Activated CD4-positive, alpha-beta T cell treated with anti-CD3 and anti-CD28 coated beads for 36 hours (primary cell): ENCODE measurements at regions of chr7 and their contacts with region 1.

Region 1: GRCh38 chr7:78020136-78020873 is 221.7 kb downstream of the PHTF2 start:
- DNase-seq: peak; percentile 45
- ATAC-seq: peak; percentile 60
- H3K4me3 Mint-ChIP-seq: peak overlapping the region; percentile 78
- H3K27ac Mint-ChIP-seq: peak overlapping the region; percentile 80
- H3K4me1 Mint-ChIP-seq: peaks cover 12% of the 10 kb centered on the region
- H3K27me3 Mint-ChIP-seq: peaks cover 21% of the 10 kb centered on the region

Region 2: GRCh38 chr7:77696198-77697028 is 323.9 kb before region 1 on chr7 and contains the start of gene RSBN1L:
- CTCF ChIA-PET with region 1: interaction called, 3 read pairs
- POLR2A ChIA-PET with region 1: no interaction called
- intact Hi-C with region 1: loop called in 1 of 2 experiments (anchors 5 kb)
- DNase-seq: peak; percentile 99
- ATAC-seq: peak; percentile 98
- H3K4me3 Mint-ChIP-seq: peak within 1 kb of the TSS; percentile 99
- H3K27ac Mint-ChIP-seq: peak within 1 kb of the TSS; percentile 95
- H3K4me1 Mint-ChIP-seq: peaks cover 45% of the 10 kb centered on the region
- H3K27me3 Mint-ChIP-seq: no peaks in the 10 kb centered on the region
- total RNA-seq, gene RSBN1L: 21.0 to 26.3 TPM

Region 3: DNA sequence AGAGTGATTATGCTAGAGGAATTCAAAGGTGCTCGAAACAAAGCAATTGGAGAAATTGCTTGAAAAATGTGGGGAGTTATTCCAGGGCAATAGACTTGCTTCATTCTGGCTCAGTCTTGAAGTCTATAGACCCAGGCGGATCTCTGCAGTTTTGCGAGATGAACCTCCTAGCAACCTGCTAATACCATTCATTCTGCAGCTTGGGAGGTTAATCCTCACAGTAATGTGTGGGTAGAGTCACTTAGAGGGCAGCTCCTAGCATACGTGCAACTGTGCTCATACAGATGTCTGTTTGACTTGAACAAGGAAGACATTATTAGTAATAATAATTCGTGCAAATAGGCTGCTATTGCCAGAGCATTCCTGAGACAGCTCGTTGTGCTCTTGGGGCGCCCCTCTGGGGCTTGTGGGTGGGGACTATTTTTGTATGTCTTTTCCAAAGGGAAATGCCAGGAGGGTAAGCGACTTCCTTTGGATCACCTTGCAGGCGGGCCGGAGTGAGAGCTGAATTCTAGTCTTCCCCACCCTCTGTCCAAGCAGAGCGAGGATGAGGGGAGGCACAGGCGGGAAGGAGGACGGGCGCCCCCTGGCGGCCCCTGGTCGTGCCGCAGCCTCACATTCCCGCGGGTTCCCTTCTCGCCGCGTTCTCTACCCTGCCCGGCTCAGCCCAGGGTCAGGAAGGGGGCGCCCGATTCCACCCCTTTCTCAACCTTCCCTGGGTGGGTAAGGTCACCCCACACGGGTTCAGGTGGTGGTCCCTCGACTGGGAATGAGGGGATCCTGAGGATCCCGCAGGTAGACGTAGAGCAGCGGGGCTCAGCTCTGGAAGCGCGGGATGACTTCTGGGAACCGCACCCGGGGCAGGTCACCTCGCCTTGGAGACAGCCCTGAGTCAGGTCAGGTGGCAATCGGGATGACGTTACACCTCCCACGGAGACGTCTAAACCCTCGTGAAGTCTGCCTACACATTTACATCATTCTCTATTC is 19.8 kb after region 1 on chr7:
- CTCF ChIA-PET with region 1: interaction called, 51 read pairs
- POLR2A ChIA-PET with region 1: no interaction called
- intact Hi-C with region 1: loop called (anchors 1 to 2 kb)
- DNase-seq: peak; percentile 72
- ATAC-seq: peak; percentile 92
- H3K4me3 Mint-ChIP-seq: no peak overlapping the region
- H3K27ac Mint-ChIP-seq: no peak overlapping the region
- H3K4me1 Mint-ChIP-seq: no peaks in the 10 kb centered on the region
- H3K27me3 Mint-ChIP-seq: peaks cover 18% of the 10 kb centered on the region

Region 4: DNA sequence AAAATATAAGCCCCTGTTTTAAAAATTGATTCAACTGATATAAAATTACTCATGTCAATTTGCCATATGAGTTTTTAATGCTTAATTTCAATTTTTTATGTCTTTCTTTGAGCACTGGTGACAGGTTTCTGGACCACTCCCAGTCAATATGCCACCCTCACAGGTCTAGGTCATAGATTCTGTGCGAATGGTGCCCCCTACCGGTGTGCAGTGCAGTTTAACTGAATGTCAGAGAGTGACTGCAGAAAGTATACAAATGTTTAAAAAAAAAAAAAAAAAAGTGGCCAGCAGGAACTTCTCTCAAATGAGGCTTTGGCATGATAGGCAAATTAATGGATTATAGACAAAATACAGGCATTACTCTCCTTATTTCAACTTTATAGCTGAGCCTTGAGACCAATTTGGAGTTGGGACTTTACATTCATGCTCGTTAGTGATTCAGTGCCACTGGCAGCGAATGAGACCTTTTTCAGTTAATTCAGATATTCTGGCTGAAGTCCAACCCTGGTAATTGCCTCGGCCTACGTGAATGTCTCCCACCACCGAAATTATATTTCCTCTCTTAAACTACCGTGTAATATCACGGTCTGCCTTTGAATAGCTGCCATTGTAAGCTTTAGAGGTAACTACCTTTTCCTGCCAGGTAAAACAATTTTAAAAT is 205.9 kb after region 1 on chr7:
- CTCF ChIA-PET with region 1: no interaction called
- POLR2A ChIA-PET with region 1: no interaction called
- intact Hi-C with region 1: loop called in 1 of 2 experiments (anchors 5 kb)
- DNase-seq: peak; percentile 70
- ATAC-seq: no peak
- H3K4me3 Mint-ChIP-seq: no peak overlapping the region
- H3K27ac Mint-ChIP-seq: no peak overlapping the region
- H3K4me1 Mint-ChIP-seq: no peaks in the 10 kb centered on the region
- H3K27me3 Mint-ChIP-seq: peaks cover 12% of the 10 kb centered on the region